Psoas muscle (tissue), 8 donors: ENCODE measurements at regions of chr1 and their contacts with region 1.

Region 1: GRCh38 chr1:77614037-77614436 is 68.4 kb downstream of the ZZZ3 start:
- DNase-seq: no peak
- ATAC-seq: no peak
- H3K4me3 ChIP-seq: no peak overlapping the region
- H3K27ac ChIP-seq: no peak overlapping the region
- H3K4me1 ChIP-seq: no peaks in the 10 kb centered on the region
- H3K27me3 ChIP-seq: no peaks in the 10 kb centered on the region
- CTCF ChIP-seq: no peak

Region 2: GRCh38 chr1:77565321-77565720 is 48.7 kb before region 1 on chr1:
- intact Hi-C with region 1: no loop called
- DNase-seq: no peak
- ATAC-seq: no peak
- H3K4me3 ChIP-seq: no peak overlapping the region
- H3K27ac ChIP-seq: no peak overlapping the region
- H3K4me1 ChIP-seq: no peaks in the 10 kb centered on the region
- H3K27me3 ChIP-seq: no peaks in the 10 kb centered on the region
- CTCF ChIP-seq: no peak

Region 3: GRCh38 chr1:77594366-77595112 is 19.5 kb before region 1 on chr1:
- intact Hi-C with region 1: loop called in 1 of 2 experiments (anchors 2 kb)
- DNase-seq: no peak
- ATAC-seq: peak in 3 of 4 donors; percentile 57 to 63 (median 58)
- H3K4me3 ChIP-seq: no peak overlapping the region
- H3K27ac ChIP-seq: no peak overlapping the region
- H3K4me1 ChIP-seq: peaks cover 24% of the 10 kb centered on the region
- H3K27me3 ChIP-seq: no peaks in the 10 kb centered on the region
- CTCF ChIP-seq: no peak